ENCODE measurements at regions of chr19 and their contacts with region 1.

Region 1: GRCh38 chr19:46840136-46840942 is 10.3 kb downstream of the AP2S1 start:
- DNase-seq: peak; percentile 32
- ATAC-seq: peak; percentile 88
- H3K4me3 Mint-ChIP-seq: no peak overlapping the region
- H3K27ac Mint-ChIP-seq: no peak overlapping the region
- H3K4me1 Mint-ChIP-seq: peaks cover 5% of the 10 kb centered on the region
- H3K27me3 Mint-ChIP-seq: no peaks in the 10 kb centered on the region
- CTCF ChIP-seq: peak; percentile 16

Region 2: GRCh38 chr19:46529622-46530462 is 310.5 kb before region 1 on chr19:
- CTCF ChIA-PET with region 1: interaction called, 8 read pairs
- POLR2A ChIA-PET with region 1: no interaction called
- intact Hi-C with region 1: loop called (anchors 10 kb)
- DNase-seq: peak; percentile 63
- ATAC-seq: peak; percentile 72
- H3K4me3 Mint-ChIP-seq: no peak overlapping the region
- H3K27ac Mint-ChIP-seq: no peak overlapping the region
- H3K4me1 Mint-ChIP-seq: peaks cover 10% of the 10 kb centered on the region
- H3K27me3 Mint-ChIP-seq: peaks cover 9% of the 10 kb centered on the region
- CTCF ChIP-seq: peak; percentile 84

Region 3: GRCh38 chr19:46704379-46705076 is 135.8 kb before region 1 on chr19:
- CTCF ChIA-PET with region 1: interaction called, 6 read pairs
- POLR2A ChIA-PET with region 1: interaction called, 4 read pairs
- intact Hi-C with region 1: loop called (anchors 1 kb)
- DNase-seq: peak; percentile 86
- ATAC-seq: peak; percentile 95
- H3K4me3 Mint-ChIP-seq: no peak overlapping the region
- H3K27ac Mint-ChIP-seq: peak overlapping the region; percentile 18
- H3K4me1 Mint-ChIP-seq: peaks cover 6% of the 10 kb centered on the region
- H3K27me3 Mint-ChIP-seq: no peaks in the 10 kb centered on the region
- CTCF ChIP-seq: peak; percentile 71

Region 4: GRCh38 chr19:46746281-46747013 is 93.9 kb before region 1 on chr19 and contains the start of gene STRN4:
- CTCF ChIA-PET with region 1: interaction called, 21 read pairs
- POLR2A ChIA-PET with region 1: no interaction called
- intact Hi-C with region 1: loop called (anchors 1 kb)
- DNase-seq: peak; percentile 51
- ATAC-seq: peak; percentile 66
- H3K4me3 Mint-ChIP-seq: peak within 1 kb of the TSS; percentile 94
- H3K27ac Mint-ChIP-seq: peak within 1 kb of the TSS; percentile 83
- H3K4me1 Mint-ChIP-seq: peaks cover 64% of the 10 kb centered on the region
- H3K27me3 Mint-ChIP-seq: no peaks in the 10 kb centered on the region
- CTCF ChIP-seq: no peak
- total RNA-seq, gene STRN4: 83.9 and 90.4 TPM in 2 replicates

Region 5: DNA sequence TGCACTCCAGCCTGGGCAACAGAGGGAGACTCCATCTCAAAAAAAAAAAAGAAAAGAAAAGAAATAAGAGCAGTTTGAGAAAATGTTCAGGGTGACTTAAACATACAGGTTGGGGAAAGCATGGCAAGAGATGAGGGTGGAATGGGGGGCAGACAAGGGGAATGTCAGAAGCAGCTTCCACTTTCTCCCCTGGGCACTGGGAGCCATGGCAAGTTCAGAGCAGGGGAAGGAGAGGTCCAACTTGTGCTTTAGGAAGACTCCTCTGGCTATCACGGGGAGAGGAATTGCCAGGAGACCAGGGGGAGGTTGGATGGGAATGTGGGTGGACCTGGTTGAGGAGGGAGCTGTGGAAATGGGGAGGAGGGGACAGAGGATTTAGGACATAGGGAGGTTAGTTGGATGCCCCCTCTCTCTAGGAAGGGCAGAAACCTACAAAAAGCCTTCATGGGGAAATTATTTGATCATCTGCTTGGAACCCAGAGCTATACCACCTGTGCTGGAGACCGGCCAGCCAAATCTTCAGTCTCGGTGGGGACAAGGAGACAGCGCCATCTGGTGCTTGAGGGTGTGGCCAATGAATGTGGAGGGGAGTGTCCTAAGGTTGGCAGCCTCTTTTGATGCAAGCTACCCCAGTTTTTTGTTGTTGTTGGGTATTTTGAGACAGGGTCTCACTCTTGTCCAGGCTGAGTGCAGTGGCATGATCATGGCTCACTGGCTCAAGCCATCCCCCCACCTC is 86.8 kb before region 1 on chr19:
- CTCF ChIA-PET with region 1: interaction called, 120 read pairs
- POLR2A ChIA-PET with region 1: interaction called, 11 read pairs
- intact Hi-C with region 1: loop called (anchors 1 kb)
- DNase-seq: peak; percentile 48
- ATAC-seq: peak; percentile 87
- H3K4me3 Mint-ChIP-seq: no peak overlapping the region
- H3K27ac Mint-ChIP-seq: no peak overlapping the region
- H3K4me1 Mint-ChIP-seq: peaks cover 24% of the 10 kb centered on the region
- H3K27me3 Mint-ChIP-seq: no peaks in the 10 kb centered on the region
- CTCF ChIP-seq: no peak

Region 6: DNA sequence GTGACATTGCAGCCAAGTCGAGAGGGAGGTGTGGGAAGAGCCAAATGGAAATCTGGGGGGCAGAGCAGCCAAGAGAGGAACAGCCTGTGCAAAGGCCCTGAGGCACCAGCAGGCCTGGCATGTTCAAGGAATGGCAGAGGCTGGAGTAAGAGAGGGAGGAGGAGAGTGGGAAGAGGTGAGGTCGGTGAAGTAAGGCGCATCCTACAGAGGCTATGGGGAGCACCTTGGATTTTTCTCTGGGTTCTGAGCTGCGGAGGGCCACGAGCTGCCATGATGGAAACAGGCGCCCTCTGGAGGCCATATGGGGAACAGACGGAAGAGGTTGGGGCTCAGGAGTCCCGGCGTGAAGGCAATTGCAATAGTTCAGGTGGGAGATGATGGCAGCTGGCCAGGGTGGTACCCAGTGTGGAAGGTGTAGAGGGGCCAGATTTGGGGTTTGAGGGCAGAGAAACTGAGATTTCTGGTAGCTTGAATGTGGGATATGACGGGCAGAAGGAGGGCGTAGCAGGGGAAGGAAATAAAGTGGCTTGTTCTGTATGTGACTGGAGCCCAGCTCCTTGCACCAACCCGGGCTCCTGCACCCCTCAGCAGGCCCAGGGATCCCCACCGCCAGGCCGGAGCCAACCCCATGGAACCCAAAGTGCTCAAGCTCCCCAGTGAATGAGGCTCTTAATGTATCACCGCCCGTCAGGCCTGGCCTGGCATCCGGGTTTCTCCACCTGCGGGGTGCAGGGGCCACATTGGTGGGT is 73.6 kb before region 1 on chr19:
- CTCF ChIA-PET with region 1: interaction called, 22 read pairs
- POLR2A ChIA-PET with region 1: interaction called, 5 read pairs
- intact Hi-C with region 1: no loop called
- DNase-seq: peak; percentile 44
- ATAC-seq: peak; percentile 78
- H3K4me3 Mint-ChIP-seq: no peak overlapping the region
- H3K27ac Mint-ChIP-seq: no peak overlapping the region
- H3K4me1 Mint-ChIP-seq: peaks cover 3% of the 10 kb centered on the region
- H3K27me3 Mint-ChIP-seq: no peaks in the 10 kb centered on the region
- CTCF ChIP-seq: no peak

Region 7: DNA sequence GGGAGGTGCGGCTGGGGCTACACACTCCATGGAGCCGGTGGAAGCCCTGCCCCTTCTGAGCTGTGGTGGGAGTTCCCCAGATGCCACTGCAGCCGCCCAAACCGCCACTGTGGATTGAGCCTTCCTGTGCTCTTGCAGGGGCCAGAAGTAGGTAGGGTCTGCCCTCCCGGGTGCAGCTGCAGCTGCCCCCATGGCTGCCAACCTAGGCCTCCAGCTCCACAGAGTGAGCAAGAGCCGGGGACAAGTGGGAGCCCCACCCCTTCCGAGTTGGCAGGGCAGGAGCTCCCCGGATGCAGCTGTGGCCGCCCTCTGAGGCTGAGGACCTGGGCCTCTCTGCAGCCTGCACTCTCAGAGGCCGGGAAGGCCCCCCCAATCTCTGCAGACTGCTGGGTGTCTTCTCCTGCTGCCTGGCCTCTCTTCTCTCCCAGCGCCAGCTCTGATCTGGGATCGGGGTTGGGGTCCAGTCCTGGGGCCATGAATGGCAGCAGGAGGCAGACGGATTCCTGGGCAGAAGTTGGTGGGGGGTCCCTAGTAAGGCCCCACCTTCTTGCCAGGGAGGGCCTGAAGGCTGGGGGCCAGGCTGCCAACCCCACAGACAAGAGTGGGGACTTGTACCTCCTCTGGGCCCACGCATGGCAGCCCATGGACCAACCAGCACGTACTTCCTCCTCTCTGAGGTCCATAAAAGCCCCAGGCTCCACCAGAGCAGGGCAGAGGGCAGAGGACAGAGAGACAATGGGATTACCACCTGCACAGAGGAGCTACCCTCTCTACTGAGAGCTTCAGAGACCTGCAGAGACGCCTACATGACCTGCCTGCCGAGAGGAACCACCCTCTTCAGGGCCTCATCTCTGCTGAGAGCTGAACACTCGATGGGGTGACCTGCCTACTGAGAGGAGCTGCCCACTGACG is 18.6 kb before region 1 on chr19:
- CTCF ChIA-PET with region 1: interaction called, 14 read pairs
- POLR2A ChIA-PET with region 1: interaction called, 14 read pairs
- intact Hi-C with region 1: loop called (anchors 1 kb)
- DNase-seq: peak; percentile 54
- ATAC-seq: peak; percentile 71
- H3K4me3 Mint-ChIP-seq: peak overlapping the region; percentile 48
- H3K27ac Mint-ChIP-seq: peak overlapping the region; percentile 90
- H3K4me1 Mint-ChIP-seq: peaks cover 61% of the 10 kb centered on the region
- H3K27me3 Mint-ChIP-seq: no peaks in the 10 kb centered on the region
- CTCF ChIP-seq: no peak